PC-3 (cell line): ENCODE measurements at regions of chr4 and their contacts with region 1.

Region 1: GRCh38 chr4:127975121-127975770 is 10.0 kb downstream of the ABHD18 start:
- DNase-seq: peak; percentile 94
- ATAC-seq: peak; percentile 97
- H3K4me3 ChIP-seq: no peak overlapping the region
- H3K27ac ChIP-seq: peak overlapping the region; percentile 79
- H3K4me1 ChIP-seq: peaks cover 12% of the 10 kb centered on the region
- H3K27me3 ChIP-seq: no peaks in the 10 kb centered on the region
- CTCF ChIP-seq: no peak

Region 2: GRCh38 chr4:127880764-127881562 is 94.3 kb before region 1 on chr4 and contains the start of gene PLK4:
- CTCF ChIA-PET with region 1: no interaction called
- POLR2A ChIA-PET with region 1: no interaction called
- intact Hi-C with region 1: no loop called
- DNase-seq: peak; percentile 91
- ATAC-seq: peak; percentile 79
- H3K4me3 ChIP-seq: peak within 1 kb of the TSS; percentile 90
- H3K27ac ChIP-seq: peak within 1 kb of the TSS; percentile 80
- H3K4me1 ChIP-seq: peaks cover 28% of the 10 kb centered on the region; the same call in 1 of the 2 replicates
- H3K27me3 ChIP-seq: no peaks in the 10 kb centered on the region
- CTCF ChIP-seq: no peak
- total RNA-seq, gene PLK4: 42.5 and 54.5 TPM in 2 replicates

Region 3: GRCh38 chr4:127997534-127998388 is 22.5 kb after region 1 on chr4:
- CTCF ChIA-PET with region 1: no interaction called
- POLR2A ChIA-PET with region 1: no interaction called
- intact Hi-C with region 1: loop called (anchors 1 kb)
- DNase-seq: peak; percentile 69
- ATAC-seq: peak; percentile 87
- H3K4me3 ChIP-seq: no peak overlapping the region
- H3K27ac ChIP-seq: no peak overlapping the region
- H3K4me1 ChIP-seq: no peaks in the 10 kb centered on the region
- H3K27me3 ChIP-seq: no peaks in the 10 kb centered on the region
- CTCF ChIP-seq: peak; percentile 66

Region 4: DNA sequence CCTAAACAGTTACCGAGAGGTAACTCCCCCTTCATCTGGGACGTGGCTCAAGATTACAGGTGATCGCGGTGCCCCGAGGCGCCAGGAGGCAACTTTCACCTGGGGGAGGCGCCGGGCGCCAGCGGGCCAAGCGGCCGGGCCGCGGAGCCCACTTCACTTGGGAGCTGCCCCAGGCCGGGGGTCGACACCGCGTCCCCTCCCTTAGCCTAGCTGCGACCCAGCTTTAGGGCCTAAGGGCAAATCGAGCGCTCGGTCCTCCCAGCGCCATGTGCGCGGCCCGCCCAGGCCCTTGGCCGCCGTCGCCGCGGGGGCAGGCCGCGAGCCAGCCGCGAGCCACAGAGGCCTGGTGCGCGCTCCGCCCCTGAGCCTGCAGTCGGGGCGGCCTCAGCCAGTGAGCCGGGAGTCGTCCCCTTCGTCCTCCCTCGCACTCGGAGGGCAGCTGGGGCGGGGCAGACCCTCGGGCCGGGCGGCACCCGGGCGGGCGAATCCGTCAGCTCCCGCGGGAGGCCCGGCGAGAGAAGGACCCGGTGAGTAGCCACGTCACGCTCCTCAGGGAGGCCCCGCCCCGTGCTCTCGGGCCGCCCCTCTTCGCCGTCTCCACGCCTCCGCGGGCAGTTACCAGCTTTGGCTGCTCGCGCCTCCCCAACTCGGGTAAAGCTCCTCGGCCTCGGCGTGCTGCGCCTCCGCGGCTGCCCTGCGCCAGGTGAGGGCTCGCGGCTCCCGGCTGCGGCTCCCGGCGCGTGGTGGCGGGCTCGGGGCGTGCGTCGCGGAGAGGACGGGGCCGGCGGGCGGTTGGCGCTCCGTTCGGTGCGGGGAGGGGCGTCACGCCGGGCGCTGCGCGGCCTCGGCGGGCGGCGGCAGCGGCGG is 85.7 kb after region 1 on chr4 and contains the start of gene LARP1B:
- CTCF ChIA-PET with region 1: no interaction called
- POLR2A ChIA-PET with region 1: no interaction called
- intact Hi-C with region 1: loop called (anchors 2 kb)
- DNase-seq: peak; percentile 90
- ATAC-seq: peak; percentile 83
- H3K4me3 ChIP-seq: peak within 1 kb of the TSS; percentile 92
- H3K27ac ChIP-seq: peak within 1 kb of the TSS; percentile 86
- H3K4me1 ChIP-seq: peaks cover 9% of the 10 kb centered on the region; the same call in 1 of the 2 replicates
- H3K27me3 ChIP-seq: no peaks in the 10 kb centered on the region
- CTCF ChIP-seq: no peak
- total RNA-seq, gene LARP1B: 14.8 and 22.2 TPM in 2 replicates